Tibial artery (tissue), 4 donors: ENCODE measurements at regions of chr19 and their contacts with region 1.

Region 1: DNA sequence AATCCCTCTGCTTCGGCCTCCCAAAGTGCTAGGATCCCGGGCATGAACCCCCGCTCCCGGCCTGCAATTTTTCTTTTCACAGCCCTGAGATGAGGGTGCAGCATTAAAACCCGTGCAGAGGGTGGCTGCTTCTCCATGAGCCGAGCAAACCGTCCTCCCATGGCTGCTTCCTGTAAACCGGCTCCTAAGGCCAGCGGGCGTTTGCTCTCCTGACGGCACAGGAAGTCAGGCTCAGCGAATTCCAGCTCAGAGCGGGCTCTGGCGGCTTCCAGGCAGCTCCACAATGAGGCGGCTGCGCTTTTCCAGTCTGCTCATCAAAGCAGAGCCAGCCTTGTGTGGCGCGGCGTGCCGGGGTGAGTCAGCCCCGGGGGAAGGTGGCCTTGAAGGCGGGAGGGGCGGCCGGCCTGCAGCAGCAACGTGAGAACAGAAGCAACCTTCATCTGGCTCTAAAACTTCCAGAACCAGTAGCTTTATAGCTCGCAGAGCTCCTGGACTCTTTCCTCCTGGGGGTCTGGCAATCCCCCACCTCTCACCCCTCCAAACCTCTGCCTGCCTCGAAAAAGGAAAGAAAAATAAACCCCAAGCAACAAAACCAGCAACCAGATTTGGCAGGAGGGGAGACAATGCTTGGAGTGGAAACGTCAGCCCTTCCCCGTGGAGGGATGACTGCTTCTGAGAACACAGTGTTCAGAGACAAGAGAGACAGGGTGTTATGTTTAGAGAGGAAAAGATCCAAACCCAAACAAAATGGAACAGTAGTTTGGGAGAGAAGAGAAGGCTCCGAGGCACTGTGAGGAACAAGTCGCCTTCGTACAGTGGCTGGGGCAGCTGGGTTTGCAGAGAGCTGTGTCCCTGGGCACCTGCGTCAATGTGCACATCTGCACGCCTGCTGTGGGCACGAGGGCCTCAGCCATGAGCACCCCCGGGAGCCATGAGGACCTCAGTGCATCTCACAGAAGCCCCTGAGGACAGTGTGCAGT is 67.8 kb downstream of the GADD45B start:
- DNase-seq: peak; percentile 96 to 98
- H3K4me3 ChIP-seq: peak overlapping the region; percentile 25 to 44
- H3K27ac ChIP-seq: peak overlapping the region; percentile 86 to 96
- H3K4me1 ChIP-seq: peaks cover 17 to 81% (median 65%) of the 10 kb centered on the region in 4 donors
- H3K27me3 ChIP-seq: no peaks in the 10 kb centered on the region
- CTCF ChIP-seq: peak in 1 of 2 experiments; percentile 6

Region 2: GRCh38 chr19:2475702-2476450 is 67.9 kb before region 1 on chr19 and contains the start of gene GADD45B:
- intact Hi-C with region 1: loop called (anchors 1 kb)
- DNase-seq: peak; percentile 97 to 99
- H3K4me3 ChIP-seq: peak within 1 kb of the TSS; percentile 97 to 98
- H3K27ac ChIP-seq: peak within 1 kb of the TSS; percentile 96
- H3K4me1 ChIP-seq: peaks cover 6 to 22% (median 18%) of the 10 kb centered on the region in 4 donors
- H3K27me3 ChIP-seq: no peaks in the 10 kb centered on the region
- CTCF ChIP-seq: peak in 1 of 2 experiments; percentile 32

Region 3: DNA sequence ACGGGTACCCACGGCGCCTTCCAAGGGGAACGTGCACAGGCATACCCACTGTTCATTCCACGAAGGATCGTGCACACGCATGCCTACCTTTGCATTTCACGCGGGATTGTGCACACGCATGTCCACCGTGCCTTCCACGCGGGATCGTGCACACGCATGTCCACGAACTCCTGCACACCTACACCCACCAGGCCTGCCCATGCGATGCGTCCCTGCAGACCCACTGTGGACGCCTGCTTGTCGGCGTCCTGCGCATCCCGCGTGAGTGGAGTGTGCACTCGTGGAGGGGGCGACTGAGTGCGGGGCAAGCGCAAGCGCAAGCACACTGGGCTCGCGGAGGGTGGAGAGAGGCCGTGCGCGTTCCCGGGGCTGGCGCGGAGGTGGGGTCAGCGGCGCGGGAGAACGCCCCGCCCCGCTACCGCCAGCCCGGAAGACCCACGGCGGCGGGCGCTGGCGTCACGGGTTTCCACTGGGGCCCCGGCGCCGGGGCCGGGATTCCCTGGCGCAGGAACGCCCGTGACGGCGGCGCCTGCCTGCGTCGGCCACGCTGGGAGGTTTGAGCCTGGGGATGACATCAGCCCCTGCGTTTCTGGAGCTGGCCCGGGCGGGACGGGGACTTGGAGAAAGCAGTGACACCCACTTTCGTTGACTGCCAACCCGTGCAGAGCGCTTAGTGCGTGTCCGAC is 49.2 kb before region 1 on chr19:
- intact Hi-C with region 1: loop called (anchors 2 kb)
- DNase-seq: peak; percentile 82 to 96
- H3K4me3 ChIP-seq: peak overlapping the region; percentile 46 to 56
- H3K27ac ChIP-seq: peak overlapping the region; percentile 83 to 91
- H3K4me1 ChIP-seq: peaks cover 0 to 46% (median 33%) of the 10 kb centered on the region in 4 donors
- H3K27me3 ChIP-seq: no peaks in the 10 kb centered on the region
- CTCF ChIP-seq: no peak

Region 4: DNA sequence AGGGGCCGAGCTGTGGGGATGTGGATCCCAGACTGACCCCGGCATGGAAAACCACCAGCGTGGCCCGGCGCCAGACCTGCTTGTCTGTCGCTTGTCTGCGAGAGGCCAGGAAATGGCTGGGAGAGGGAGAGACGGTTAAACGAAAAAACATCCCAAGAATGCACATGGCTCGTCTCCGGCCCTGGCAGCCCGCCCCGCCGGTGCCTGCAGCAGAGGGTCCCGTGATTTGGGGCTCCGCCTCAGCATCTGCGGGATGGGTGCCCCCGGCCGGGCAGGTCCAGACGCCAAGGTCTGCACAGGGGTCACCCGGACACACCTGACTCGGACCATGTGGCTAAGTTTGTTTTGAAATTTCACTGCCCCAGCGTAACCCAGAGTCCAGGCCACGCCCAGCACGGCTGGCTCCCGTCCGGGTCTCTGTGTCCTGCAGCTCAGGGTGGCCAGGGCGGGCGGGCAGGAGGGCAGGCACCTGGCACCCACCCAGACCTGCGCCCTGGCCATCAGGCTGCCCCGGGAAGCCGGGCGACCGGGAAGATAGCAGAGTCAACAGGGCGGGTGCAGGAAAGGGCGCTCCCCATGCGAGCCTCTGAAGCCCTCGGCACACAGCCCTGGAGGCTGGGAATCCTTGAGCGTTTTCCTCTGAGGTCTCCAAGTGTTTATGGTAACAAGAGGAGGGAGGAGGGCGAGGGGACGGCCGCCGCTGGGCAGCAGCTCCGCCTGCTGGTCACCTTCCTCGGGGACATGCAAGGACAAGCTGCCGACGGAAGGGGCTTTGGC is 35.3 kb after region 1 on chr19:
- intact Hi-C with region 1: loop called (anchors 1 kb)
- DNase-seq: peak; percentile 92 to 97
- H3K4me3 ChIP-seq: peak overlapping the region; percentile 43 to 52
- H3K27ac ChIP-seq: peak overlapping the region; percentile 75 to 91
- H3K4me1 ChIP-seq: peaks cover 3 to 55% (median 45%) of the 10 kb centered on the region in 4 donors
- H3K27me3 ChIP-seq: no peaks in the 10 kb centered on the region
- CTCF ChIP-seq: peak; percentile 95 to 96